Aorta (tissue), 5 donors: ENCODE measurements at regions of chr6 and their contacts with region 1.

Region 1: GRCh38 chr6:113858480-113859348 is 1.6 kb downstream of the MARCKS start:
- DNase-seq: peak; percentile 91 to 96
- ATAC-seq: peak; percentile 94
- H3K4me3 ChIP-seq: peak overlapping the region; percentile 1 to 62
- H3K27ac ChIP-seq: peak overlapping the region in 1 of 2 donors; percentile 28
- H3K4me1 ChIP-seq: no peaks in the 10 kb centered on the region
- H3K27me3 ChIP-seq: no peaks in the 10 kb centered on the region

Region 2: DNA sequence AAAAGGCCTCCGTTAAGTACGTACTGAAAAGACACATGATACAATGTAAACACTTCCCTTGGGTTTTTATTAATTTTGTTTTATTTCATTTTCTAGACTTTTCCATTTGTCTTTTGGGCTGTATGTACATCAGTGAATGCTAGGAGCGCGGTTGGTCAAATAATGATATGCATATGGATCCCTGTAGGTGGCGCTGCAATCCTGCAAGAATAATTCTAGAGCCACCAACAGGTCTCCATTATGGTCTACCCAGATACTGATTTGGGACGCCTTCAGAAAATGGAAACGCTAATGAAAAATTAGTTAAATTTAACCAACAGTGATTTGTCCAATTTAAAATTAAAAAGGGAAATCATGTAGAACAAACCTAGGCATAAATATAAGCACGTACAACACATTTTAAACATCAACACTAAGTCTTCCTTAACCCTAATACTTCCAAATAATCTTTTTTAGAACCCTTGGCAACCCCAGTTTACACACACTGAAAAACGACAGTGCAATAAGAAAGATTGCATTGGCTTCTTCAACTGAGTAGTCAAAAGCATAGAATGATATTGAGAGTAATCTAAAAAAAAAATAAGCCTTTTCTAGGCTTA is 1078.1 kb before region 1 on chr6:
- intact Hi-C with region 1: loop called (anchors 2 to 5 kb)
- DNase-seq: peak; percentile 73 to 76
- ATAC-seq: peak; percentile 93
- H3K4me3 ChIP-seq: no peak overlapping the region
- H3K27ac ChIP-seq: no peak overlapping the region
- H3K4me1 ChIP-seq: peaks cover 0 to 2% of the 10 kb centered on the region in 2 donors
- H3K27me3 ChIP-seq: no peaks in the 10 kb centered on the region

Region 3: DNA sequence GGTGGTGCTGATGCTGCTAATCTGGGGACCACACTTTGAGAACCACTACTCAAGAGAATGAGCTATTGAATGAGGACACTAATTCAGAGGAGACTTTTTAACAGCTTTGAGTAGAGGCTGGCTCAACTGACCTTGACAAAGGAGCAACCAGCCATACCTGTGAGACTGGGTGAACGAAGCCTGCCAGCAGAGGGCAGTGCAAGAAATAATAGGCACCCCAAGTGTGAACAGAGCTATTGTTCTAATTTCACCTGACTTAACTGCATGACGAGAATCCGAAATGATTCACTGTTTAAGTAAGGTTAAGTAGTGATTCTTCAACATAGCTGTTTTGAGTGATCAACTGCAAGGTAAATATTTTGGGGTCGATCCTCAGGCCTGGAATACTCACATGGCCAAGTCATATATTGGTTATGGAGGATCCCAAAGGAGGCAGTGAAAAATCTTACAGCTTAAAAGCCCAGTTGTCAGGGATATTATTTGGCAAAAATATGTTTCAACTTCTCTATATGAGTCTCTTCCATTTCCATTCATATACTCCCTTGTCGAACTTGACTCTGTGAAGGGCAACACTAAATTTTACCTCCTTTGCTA is 552.1 kb before region 1 on chr6:
- intact Hi-C with region 1: loop called in 1 of 2 experiments (anchors 5 kb)
- DNase-seq: peak; percentile 45 to 78
- ATAC-seq: peak; percentile 80
- H3K4me3 ChIP-seq: no peak overlapping the region
- H3K27ac ChIP-seq: no peak overlapping the region
- H3K4me1 ChIP-seq: no peaks in the 10 kb centered on the region
- H3K27me3 ChIP-seq: no peaks in the 10 kb centered on the region

Region 4: GRCh38 chr6:113414511-113414910 is 444.2 kb before region 1 on chr6:
- intact Hi-C with region 1: loop called (anchors 5 kb)
- DNase-seq: peak in 1 of 2 donors; percentile 53
- ATAC-seq: peak; percentile 82
- H3K4me3 ChIP-seq: no peak overlapping the region
- H3K27ac ChIP-seq: no peak overlapping the region
- H3K4me1 ChIP-seq: no peaks in the 10 kb centered on the region
- H3K27me3 ChIP-seq: no peaks in the 10 kb centered on the region

Region 5: GRCh38 chr6:113632220-113632864 is 226.4 kb before region 1 on chr6:
- intact Hi-C with region 1: loop called in 1 of 2 experiments (anchors 10 kb)
- DNase-seq: peak in 1 of 2 donors; percentile 71
- ATAC-seq: peak; percentile 70
- H3K4me3 ChIP-seq: peak overlapping the region; percentile 22 to 53
- H3K27ac ChIP-seq: peak overlapping the region in 1 of 2 donors; percentile 71
- H3K4me1 ChIP-seq: peaks cover 1 to 13% of the 10 kb centered on the region in 2 donors
- H3K27me3 ChIP-seq: no peaks in the 10 kb centered on the region

Region 6: GRCh38 chr6:113873043-113873667 is 14.4 kb after region 1 on chr6:
- intact Hi-C with region 1: no loop called
- DNase-seq: peak in 1 of 2 donors; percentile 68
- ATAC-seq: peak; percentile 63
- H3K4me3 ChIP-seq: no peak overlapping the region
- H3K27ac ChIP-seq: no peak overlapping the region
- H3K4me1 ChIP-seq: peaks cover 0 to under 1% of the 10 kb centered on the region in 2 donors
- H3K27me3 ChIP-seq: no peaks in the 10 kb centered on the region